Activated CD8-positive, alpha-beta memory T cell treated with anti-CD3 and anti-CD28 coated beads, Interleukin-2, amount 10 ng/mL, durations not matched to agents 7 days and 5 days (primary cell): ENCODE measurements at regions of chr11 and their contacts with region 1.

Region 1: GRCh38 chr11:73982969-73983740 is 512 bp upstream of the UCP2 start:
- DNase-seq: peak; percentile 98
- ATAC-seq: peak; percentile 84
- H3K4me3 Mint-ChIP-seq: peak overlapping the region; percentile 93
- H3K27ac Mint-ChIP-seq: peak overlapping the region; percentile 97
- H3K4me1 Mint-ChIP-seq: peaks cover 47% of the 10 kb centered on the region
- H3K27me3 Mint-ChIP-seq: no peaks in the 10 kb centered on the region

Region 2: DNA sequence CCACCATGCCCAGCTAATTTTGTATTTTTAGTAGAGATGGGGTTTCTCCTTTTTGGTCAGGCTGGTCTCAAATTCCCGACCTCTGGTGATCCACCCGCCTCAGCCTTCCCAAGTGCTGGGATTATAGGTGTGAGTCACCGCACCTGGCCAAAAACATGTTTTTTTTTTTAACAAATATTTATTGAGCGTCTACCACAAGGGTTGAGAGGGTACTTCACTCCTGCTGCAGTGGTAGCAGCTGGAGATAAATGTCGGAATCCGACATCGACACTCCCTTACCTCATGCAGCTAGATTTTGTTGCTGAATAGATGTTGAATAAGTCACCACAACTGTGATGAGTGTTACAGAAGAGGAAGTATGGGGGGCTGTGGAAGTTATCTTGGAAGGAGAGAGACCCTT is 31.4 kb before region 1 on chr11:
- CTCF ChIA-PET with region 1: no interaction called
- DNase-seq: no peak
- ATAC-seq: no peak
- H3K4me3 Mint-ChIP-seq: no peak overlapping the region
- H3K27ac Mint-ChIP-seq: no peak overlapping the region
- H3K4me1 Mint-ChIP-seq: no peaks in the 10 kb centered on the region
- H3K27me3 Mint-ChIP-seq: peaks cover 4% of the 10 kb centered on the region

Region 3: GRCh38 chr11:73965076-73965860 is 17.9 kb before region 1 on chr11:
- CTCF ChIA-PET with region 1: interaction called, 13 read pairs
- DNase-seq: no peak
- ATAC-seq: no peak
- H3K4me3 Mint-ChIP-seq: no peak overlapping the region
- H3K27ac Mint-ChIP-seq: no peak overlapping the region
- H3K4me1 Mint-ChIP-seq: peaks cover 25% of the 10 kb centered on the region
- H3K27me3 Mint-ChIP-seq: no peaks in the 10 kb centered on the region

Region 4: DNA sequence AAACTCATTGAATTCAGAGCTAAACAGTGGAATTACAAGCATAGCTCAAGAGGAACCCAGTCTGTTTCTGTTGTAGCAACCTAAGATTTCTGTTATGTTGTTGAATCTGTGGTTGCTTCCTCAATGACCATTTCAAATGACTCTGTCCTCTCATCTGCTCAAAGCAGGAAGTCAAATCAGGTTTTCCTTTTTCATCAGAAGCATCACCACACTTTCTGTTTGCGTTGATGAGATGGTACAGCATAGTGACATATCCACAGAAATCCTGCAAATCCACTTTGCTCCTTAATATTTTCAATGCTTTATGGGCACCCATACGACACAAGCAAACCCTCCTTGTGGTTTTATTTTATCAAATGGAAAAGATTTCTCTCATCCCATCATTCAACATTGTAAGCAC is 12.1 kb after region 1 on chr11:
- CTCF ChIA-PET with region 1: interaction called, 13 read pairs
- DNase-seq: no peak
- ATAC-seq: peak; percentile 81
- H3K4me3 Mint-ChIP-seq: peak overlapping the region; percentile 38
- H3K27ac Mint-ChIP-seq: peak overlapping the region; percentile 89
- H3K4me1 Mint-ChIP-seq: peaks cover 46% of the 10 kb centered on the region
- H3K27me3 Mint-ChIP-seq: no peaks in the 10 kb centered on the region

Region 5: DNA sequence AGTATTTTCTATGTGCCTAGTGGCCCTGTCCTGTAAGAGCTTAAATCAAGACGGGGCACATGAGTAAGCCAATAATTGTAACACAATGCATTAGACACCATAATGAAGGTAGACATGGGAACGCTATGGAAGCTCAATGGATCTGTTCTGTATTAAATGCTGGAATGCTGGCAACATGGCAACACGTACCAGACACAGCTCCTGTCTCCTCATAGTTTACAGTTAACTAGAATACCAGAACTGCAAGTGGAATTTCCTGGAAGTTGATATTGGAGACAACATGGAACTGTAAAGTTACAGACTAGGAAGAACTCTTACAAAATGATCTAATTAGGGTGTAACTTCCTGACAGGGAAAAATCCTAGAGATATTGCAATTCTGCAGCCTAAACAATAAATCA is 315.9 kb after region 1 on chr11:
- CTCF ChIA-PET with region 1: no interaction called
- DNase-seq: no peak
- ATAC-seq: no peak
- H3K4me3 Mint-ChIP-seq: no peak overlapping the region
- H3K27ac Mint-ChIP-seq: no peak overlapping the region
- H3K4me1 Mint-ChIP-seq: peaks cover 5% of the 10 kb centered on the region
- H3K27me3 Mint-ChIP-seq: peaks cover 39% of the 10 kb centered on the region